ENCODE measurements at regions of chr21 and their contacts with region 1.

Region 1: GRCh38 chr21:36122977-36123376 is 11.9 kb upstream of the CBR3 start:
- DNase-seq: no peak
- H3K4me3 Mint-ChIP-seq: no peak overlapping the region
- H3K27ac Mint-ChIP-seq: no peak overlapping the region
- H3K4me1 Mint-ChIP-seq: peaks cover 10% of the 10 kb centered on the region
- H3K27me3 Mint-ChIP-seq: no peaks in the 10 kb centered on the region
- CTCF ChIP-seq: no peak

Region 2: DNA sequence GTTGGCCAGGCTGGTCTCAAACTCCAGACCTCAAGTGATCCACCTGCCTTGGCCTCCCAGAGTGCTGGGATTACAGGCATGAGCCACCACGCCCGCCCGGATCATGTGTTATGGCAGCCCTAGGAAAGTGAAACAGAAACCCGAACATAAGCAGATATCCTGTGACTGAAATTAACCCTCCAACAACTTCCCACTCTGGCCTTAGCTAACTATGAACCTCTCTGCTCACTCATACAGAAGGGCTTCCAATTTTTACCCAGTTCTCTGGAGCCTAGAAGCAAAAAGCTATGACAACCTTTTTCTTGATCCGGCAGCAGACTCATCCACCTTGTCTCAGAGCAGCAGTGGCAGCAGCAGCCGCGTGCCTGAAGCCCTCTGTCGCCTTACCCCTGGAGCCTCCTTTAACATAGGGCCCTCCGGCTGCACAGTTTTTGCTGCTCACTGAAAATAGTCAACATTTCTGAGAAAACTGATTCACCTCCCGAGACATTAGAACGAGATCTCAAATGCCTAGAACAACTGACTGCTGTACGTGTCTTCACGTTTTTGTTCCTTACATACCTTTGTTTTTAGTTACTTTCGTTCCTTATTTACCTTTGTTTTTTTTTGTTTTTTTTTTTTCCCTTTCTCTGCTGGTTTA is 43.8 kb before region 1 on chr21:
- CTCF ChIA-PET with region 1: no interaction called
- intact Hi-C with region 1: no loop called
- DNase-seq: no peak
- H3K4me3 Mint-ChIP-seq: no peak overlapping the region
- H3K27ac Mint-ChIP-seq: no peak overlapping the region
- H3K4me1 Mint-ChIP-seq: no peaks in the 10 kb centered on the region
- H3K27me3 Mint-ChIP-seq: no peaks in the 10 kb centered on the region
- CTCF ChIP-seq: no peak

Region 3: GRCh38 chr21:36282568-36283230 is 159.7 kb after region 1 on chr21:
- CTCF ChIA-PET with region 1: no interaction called
- intact Hi-C with region 1: no loop called
- DNase-seq: no peak
- H3K4me3 Mint-ChIP-seq: no peak overlapping the region
- H3K27ac Mint-ChIP-seq: no peak overlapping the region
- H3K4me1 Mint-ChIP-seq: no peaks in the 10 kb centered on the region
- H3K27me3 Mint-ChIP-seq: no peaks in the 10 kb centered on the region
- CTCF ChIP-seq: no peak

Region 4: DNA sequence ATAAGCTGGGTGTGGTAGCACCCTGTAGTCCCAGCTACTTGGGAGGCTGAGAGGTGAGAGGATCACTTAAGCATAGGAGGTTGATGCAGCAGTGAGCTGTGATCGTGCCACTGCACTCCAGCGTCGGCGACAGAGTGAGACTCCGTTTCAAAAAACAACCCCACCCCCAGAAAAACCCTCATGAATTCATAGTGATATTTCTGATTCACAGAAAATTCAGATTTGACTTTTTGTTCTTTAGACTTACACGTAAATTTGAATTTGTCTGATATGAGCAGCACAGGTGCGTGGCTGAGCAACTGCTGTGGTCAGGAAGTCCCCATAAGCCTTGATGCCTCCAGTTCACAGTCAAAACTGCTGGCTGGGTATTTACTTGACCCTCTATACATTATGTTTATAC is 187.0 kb after region 1 on chr21:
- CTCF ChIA-PET with region 1: interaction called, 11 read pairs
- intact Hi-C with region 1: no loop called
- DNase-seq: no peak
- H3K4me3 Mint-ChIP-seq: no peak overlapping the region
- H3K27ac Mint-ChIP-seq: no peak overlapping the region
- H3K4me1 Mint-ChIP-seq: no peaks in the 10 kb centered on the region
- H3K27me3 Mint-ChIP-seq: peaks cover 4% of the 10 kb centered on the region
- CTCF ChIP-seq: no peak

Measured in Calu3 (cell line).